ENCODE measurements at regions of chr3 and their contacts with region 1.

Region 1: DNA sequence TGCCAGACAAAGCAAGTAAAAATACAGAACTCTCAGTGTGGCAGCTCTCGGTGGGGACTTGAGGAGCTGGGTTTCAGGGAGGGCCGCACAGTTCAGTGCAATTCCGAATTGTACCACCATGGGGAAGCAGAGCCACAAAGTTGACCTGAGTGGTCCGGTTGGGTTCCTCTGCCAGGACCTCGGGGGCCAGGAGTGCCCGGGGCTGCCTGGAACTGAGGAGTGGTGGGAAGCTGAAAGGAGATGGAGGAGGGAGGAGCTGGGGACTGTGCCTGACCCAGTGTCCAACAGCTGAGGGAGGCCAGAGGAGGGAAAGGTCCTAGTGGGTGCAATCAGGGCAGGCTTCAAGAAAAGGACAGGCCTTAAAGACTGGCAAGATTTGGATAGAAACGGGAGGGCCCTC is 32.2 kb upstream of the TRH start:
- DNase-seq: peak; percentile 86
- H3K4me3 ChIP-seq: peak overlapping the region in 1 of 2 experiments; percentile 30; a peak in 1 of 4 replicates
- H3K27ac ChIP-seq: no peak overlapping the region
- H3K4me1 ChIP-seq: no peaks in the 10 kb centered on the region
- H3K27me3 ChIP-seq: no peaks in the 10 kb centered on the region; the same call in 1 of the 2 replicates
- CTCF ChIP-seq: peak; percentile 73
- EP300 ChIP-seq: no peak
- RAD21 ChIP-seq: peak; percentile 92

Region 2: GRCh38 chr3:129469026-129469425 is 473.3 kb before region 1 on chr3:
- CTCF ChIA-PET with region 1: no interaction called
- POLR2A ChIA-PET with region 1: no interaction called
- DNase-seq: no peak
- H3K4me3 ChIP-seq: no peak overlapping the region
- H3K27ac ChIP-seq: no peak overlapping the region
- H3K4me1 ChIP-seq: no peaks in the 10 kb centered on the region
- H3K27me3 ChIP-seq: no peaks in the 10 kb centered on the region
- CTCF ChIP-seq: no peak
- EP300 ChIP-seq: no peak
- RAD21 ChIP-seq: no peak

Region 3: DNA sequence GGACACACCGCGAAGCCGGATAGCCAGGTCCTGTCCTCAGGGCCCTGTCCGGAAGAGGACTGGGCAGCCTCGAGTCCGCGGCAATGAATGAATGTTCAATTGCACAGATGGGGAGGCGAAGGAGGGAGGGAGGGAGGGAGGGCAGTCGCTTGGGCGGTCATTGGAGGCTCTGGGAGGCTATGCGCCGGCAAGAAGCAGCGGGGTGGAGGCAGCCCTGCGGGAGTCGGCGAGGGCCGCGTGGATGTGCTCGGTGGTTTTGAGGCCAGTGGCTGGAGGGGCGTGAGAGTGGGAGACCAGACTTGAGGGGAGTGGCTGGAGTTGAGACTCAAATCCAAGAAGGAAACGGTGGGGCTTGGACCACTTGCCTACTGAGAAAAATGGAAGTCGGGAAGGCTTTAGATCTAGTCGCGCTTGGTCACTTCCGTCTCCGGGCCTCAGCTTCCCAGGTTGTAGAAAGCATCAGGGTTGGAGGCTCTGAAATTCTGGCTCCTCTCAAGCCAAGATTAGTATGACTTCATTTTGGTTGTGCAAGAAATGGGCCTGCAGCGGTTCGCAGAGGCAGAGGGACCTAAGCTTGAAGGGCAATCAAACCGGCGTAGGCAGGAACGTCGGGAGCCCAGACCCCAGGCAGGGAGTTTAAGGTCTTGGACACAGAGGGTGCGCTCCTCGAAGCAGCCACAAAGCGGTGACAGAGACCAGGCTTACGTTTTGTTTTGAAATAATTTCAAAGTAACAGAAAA is 314.7 kb before region 1 on chr3:
- CTCF ChIA-PET with region 1: interaction called, 15 read pairs
- POLR2A ChIA-PET with region 1: no interaction called
- DNase-seq: peak; percentile 77
- H3K4me3 ChIP-seq: no peak overlapping the region; a peak in 1 of 4 replicates
- H3K27ac ChIP-seq: no peak overlapping the region
- H3K4me1 ChIP-seq: no peaks in the 10 kb centered on the region; a peak in 1 of 4 replicates
- H3K27me3 ChIP-seq: no peaks in the 10 kb centered on the region
- CTCF ChIP-seq: peak; percentile 67
- EP300 ChIP-seq: no peak
- RAD21 ChIP-seq: peak; percentile 83

Region 4: GRCh38 chr3:129954514-129954913 is 12.2 kb after region 1 on chr3:
- CTCF ChIA-PET with region 1: interaction called, 39 read pairs
- POLR2A ChIA-PET with region 1: no interaction called
- DNase-seq: no peak
- H3K4me3 ChIP-seq: no peak overlapping the region
- H3K27ac ChIP-seq: no peak overlapping the region
- H3K4me1 ChIP-seq: no peaks in the 10 kb centered on the region
- H3K27me3 ChIP-seq: peaks cover 22% of the 10 kb centered on the region; the same call in 1 of the 2 replicates
- CTCF ChIP-seq: no peak
- EP300 ChIP-seq: no peak
- RAD21 ChIP-seq: no peak

Region 5: GRCh38 chr3:129975038-129975704 is 32.9 kb after region 1 on chr3:
- CTCF ChIA-PET with region 1: interaction called, 14 read pairs
- POLR2A ChIA-PET with region 1: no interaction called
- DNase-seq: peak; percentile 65
- H3K4me3 ChIP-seq: peak overlapping the region in 1 of 2 experiments; percentile 10; a peak in 1 of 4 replicates
- H3K27ac ChIP-seq: no peak overlapping the region
- H3K4me1 ChIP-seq: peaks cover 0 to 6% of the 10 kb centered on the region in 2 experiments; a peak in 1 of 4 replicates
- H3K27me3 ChIP-seq: peaks cover 60% of the 10 kb centered on the region
- CTCF ChIP-seq: no peak
- EP300 ChIP-seq: no peak
- RAD21 ChIP-seq: no peak

Region 6: GRCh38 chr3:130010556-130010955 is 68.3 kb after region 1 on chr3:
- CTCF ChIA-PET with region 1: interaction called, 18 read pairs
- POLR2A ChIA-PET with region 1: no interaction called
- DNase-seq: peak; percentile 41
- H3K4me3 ChIP-seq: no peak overlapping the region
- H3K27ac ChIP-seq: no peak overlapping the region
- H3K4me1 ChIP-seq: peaks cover 0 to 2% of the 10 kb centered on the region in 2 experiments; a peak in 1 of 4 replicates
- H3K27me3 ChIP-seq: peaks cover 6% of the 10 kb centered on the region; the same call in 1 of the 2 replicates
- CTCF ChIP-seq: no peak
- EP300 ChIP-seq: no peak
- RAD21 ChIP-seq: no peak